ENCODE measurements at regions of chr20 and their contacts with region 1.

Region 1: GRCh38 chr20:34363062-34363464 is at the start of gene ITCH:
- DNase-seq: peak; percentile 98
- H3K4me3 Mint-ChIP-seq: peak within 1 kb of the TSS; percentile 76
- H3K27ac Mint-ChIP-seq: peak within 1 kb of the TSS; percentile 84
- H3K4me1 Mint-ChIP-seq: peaks cover 42% of the 10 kb centered on the region
- H3K27me3 Mint-ChIP-seq: no peaks in the 10 kb centered on the region
- CTCF ChIP-seq: no peak
- total RNA-seq, gene ITCH: 90.1 and 91.6 TPM in 2 replicates

Region 2: DNA sequence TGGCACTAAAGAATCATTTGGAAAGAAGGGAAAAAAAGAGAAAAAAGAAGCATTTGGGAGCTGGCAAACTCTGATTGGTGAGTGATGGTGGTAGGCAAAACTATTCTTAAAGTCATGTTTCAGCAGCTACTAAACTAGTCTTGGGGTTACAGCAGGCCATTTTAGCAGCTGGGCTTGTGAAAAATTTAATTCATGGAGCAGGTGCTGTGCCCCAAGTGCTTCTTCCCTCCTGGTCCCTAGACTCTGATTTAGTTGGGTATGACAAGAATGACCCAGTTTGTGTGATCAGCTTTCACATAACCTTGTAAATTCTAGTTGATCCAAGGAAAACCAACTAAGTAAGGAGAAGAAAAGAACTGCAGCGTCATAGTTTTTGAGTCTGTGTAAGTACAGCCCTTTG is 122.9 kb before region 1 on chr20:
- CTCF ChIA-PET with region 1: no interaction called
- intact Hi-C with region 1: no loop called
- DNase-seq: no peak
- H3K4me3 Mint-ChIP-seq: no peak overlapping the region
- H3K27ac Mint-ChIP-seq: no peak overlapping the region
- H3K4me1 Mint-ChIP-seq: no peaks in the 10 kb centered on the region
- H3K27me3 Mint-ChIP-seq: peaks cover 76% of the 10 kb centered on the region
- CTCF ChIP-seq: no peak

Region 3: GRCh38 chr20:34318609-34319443 is 44.2 kb before region 1 on chr20:
- CTCF ChIA-PET with region 1: interaction called, 50 read pairs
- intact Hi-C with region 1: loop called (anchors 2 kb)
- DNase-seq: no peak
- H3K4me3 Mint-ChIP-seq: no peak overlapping the region
- H3K27ac Mint-ChIP-seq: no peak overlapping the region
- H3K4me1 Mint-ChIP-seq: peaks cover 64% of the 10 kb centered on the region
- H3K27me3 Mint-ChIP-seq: no peaks in the 10 kb centered on the region
- CTCF ChIP-seq: no peak

Region 4: GRCh38 chr20:34373445-34373844 is 10.4 kb after region 1 on chr20:
- CTCF ChIA-PET with region 1: interaction called, 12 read pairs
- intact Hi-C with region 1: no loop called
- DNase-seq: no peak
- H3K4me3 Mint-ChIP-seq: no peak overlapping the region
- H3K27ac Mint-ChIP-seq: no peak overlapping the region
- H3K4me1 Mint-ChIP-seq: peaks cover 17% of the 10 kb centered on the region
- H3K27me3 Mint-ChIP-seq: no peaks in the 10 kb centered on the region
- CTCF ChIP-seq: no peak

Region 5: GRCh38 chr20:34401741-34402455 is 38.8 kb after region 1 on chr20:
- CTCF ChIA-PET with region 1: interaction called, 8 read pairs
- intact Hi-C with region 1: loop called (anchors 5 kb)
- DNase-seq: no peak
- H3K4me3 Mint-ChIP-seq: no peak overlapping the region
- H3K27ac Mint-ChIP-seq: no peak overlapping the region
- H3K4me1 Mint-ChIP-seq: peaks cover 56% of the 10 kb centered on the region
- H3K27me3 Mint-ChIP-seq: no peaks in the 10 kb centered on the region
- CTCF ChIP-seq: no peak